ENCODE measurements at regions of chr3 and their contacts with region 1.

Region 1: DNA sequence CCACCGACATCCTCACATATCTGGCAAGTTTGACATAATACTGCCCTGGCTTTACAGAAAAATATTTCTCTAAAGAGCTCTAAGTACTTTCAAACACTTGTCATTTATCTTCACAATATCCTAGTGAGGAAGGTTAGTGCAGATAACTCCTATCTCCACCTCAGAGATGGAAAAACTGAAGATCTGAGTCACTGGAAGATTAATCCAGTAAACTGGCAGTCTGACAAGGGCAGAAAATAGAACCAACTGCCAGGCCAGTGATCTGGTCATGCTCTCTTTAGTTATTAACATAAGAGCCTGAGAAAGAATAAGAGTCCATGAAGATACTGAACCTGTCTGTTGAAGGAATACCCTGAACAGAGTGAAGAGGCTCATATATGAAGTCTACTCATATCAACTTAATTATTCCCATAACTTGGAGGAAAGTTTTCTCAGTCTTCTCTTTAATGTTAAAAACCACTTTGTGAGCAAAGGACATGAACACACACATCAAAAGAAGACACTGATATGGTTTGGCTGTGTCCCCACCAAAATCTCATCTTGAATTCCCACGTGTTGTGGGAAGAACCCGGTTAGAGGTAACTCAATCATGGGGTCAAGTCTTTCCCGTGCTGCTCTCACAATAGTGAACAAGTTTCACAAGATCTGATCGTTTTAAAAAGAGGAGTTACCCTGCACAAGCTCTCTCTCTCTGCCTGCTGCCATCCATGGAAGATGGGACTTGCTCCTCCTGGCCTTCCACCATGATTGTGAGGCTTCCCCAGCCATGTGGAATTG is 61.4 kb downstream of the GOLIM4 start:
- DNase-seq: no peak
- H3K4me3 ChIP-seq: no peak overlapping the region
- H3K27ac ChIP-seq: no peak overlapping the region
- H3K4me1 ChIP-seq: peaks cover 0 to 4% (median 0%) of the 10 kb centered on the region in 4 donors
- H3K27me3 ChIP-seq: no peaks in the 10 kb centered on the region
- CTCF ChIP-seq: no peak
- EP300 ChIP-seq: no peak
- POLR2A ChIP-seq: no peak

Region 2: DNA sequence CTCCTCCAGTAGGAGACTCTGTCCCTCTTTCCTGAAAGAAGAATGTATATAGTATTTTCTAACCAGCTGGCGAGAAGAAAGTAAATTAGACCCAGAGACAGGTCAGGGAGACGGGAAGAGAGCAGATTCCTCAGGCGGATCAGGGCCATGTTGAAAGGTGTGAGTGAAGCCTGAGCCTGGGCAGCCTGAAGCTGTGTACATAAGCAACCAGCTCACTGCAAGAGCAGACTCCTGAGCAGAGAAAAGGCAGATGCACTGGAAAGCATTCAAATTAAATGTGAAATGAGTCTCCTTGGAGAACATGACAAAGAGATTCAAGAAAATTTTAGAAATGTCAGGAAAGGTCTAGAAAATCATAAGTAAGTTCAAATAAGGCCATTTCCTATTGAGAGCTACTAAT is 104.4 kb before region 1 on chr3:
- in situ Hi-C with region 1: loop called in 2 of 4 experiments (anchors 5 to 10 kb)
- intact Hi-C with region 1: no loop called
- DNase-seq: no peak
- H3K4me3 ChIP-seq: no peak overlapping the region
- H3K27ac ChIP-seq: no peak overlapping the region
- H3K4me1 ChIP-seq: no peaks in the 10 kb centered on the region
- H3K27me3 ChIP-seq: no peaks in the 10 kb centered on the region
- CTCF ChIP-seq: no peak
- EP300 ChIP-seq: no peak
- POLR2A ChIP-seq: no peak

Measured in transverse colon (tissue), 4 donors.